ENCODE measurements at regions of chr2 and their contacts with region 1.

Region 1: GRCh38 chr2:135590619-135591260 is 59.5 kb downstream of the R3HDM1 start:
- DNase-seq: no peak
- ATAC-seq: no peak

Region 2: GRCh38 chr2:135004005-135004746 is 586.6 kb before region 1 on chr2:
- intact Hi-C with region 1: loop called (anchors 10 kb)
- DNase-seq: peak; percentile 81
- ATAC-seq: peak; percentile 95

Region 3: DNA sequence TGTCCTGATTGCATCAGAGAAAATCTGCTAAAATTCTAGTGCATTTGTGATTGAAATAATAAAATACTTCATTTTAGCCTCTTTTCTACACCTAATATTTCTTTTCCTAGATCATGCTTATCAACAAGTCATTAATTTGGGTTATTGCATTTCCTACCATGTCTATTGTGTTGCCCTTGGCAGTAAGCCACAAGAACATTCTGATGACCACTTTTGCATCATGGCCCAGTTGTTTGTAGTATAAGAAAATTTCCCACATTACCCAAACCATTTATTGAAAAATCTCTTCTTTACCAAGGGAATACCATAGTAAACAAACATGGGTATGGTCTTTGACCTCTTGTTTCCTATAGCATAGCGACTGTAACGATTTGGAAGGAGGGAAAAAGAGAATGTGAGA is 16.8 kb after region 1 on chr2:
- intact Hi-C with region 1: no loop called
- DNase-seq: no peak
- ATAC-seq: no peak